Heart right ventricle (tissue), 16 donors: ENCODE measurements at regions of chr15 and their contacts with region 1.

Region 1: GRCh38 chr15:58274885-58275284 is 136.7 kb downstream of the AQP9 start:
- DNase-seq: no peak
- ATAC-seq: no peak
- H3K4me3 ChIP-seq: no peak overlapping the region
- H3K27ac ChIP-seq: no peak overlapping the region
- H3K4me1 ChIP-seq: peaks cover 0 to 5% (median 0%) of the 10 kb centered on the region in 9 donors
- H3K27me3 ChIP-seq: no peaks in the 10 kb centered on the region
- CTCF ChIP-seq: no peak

Region 2: DNA sequence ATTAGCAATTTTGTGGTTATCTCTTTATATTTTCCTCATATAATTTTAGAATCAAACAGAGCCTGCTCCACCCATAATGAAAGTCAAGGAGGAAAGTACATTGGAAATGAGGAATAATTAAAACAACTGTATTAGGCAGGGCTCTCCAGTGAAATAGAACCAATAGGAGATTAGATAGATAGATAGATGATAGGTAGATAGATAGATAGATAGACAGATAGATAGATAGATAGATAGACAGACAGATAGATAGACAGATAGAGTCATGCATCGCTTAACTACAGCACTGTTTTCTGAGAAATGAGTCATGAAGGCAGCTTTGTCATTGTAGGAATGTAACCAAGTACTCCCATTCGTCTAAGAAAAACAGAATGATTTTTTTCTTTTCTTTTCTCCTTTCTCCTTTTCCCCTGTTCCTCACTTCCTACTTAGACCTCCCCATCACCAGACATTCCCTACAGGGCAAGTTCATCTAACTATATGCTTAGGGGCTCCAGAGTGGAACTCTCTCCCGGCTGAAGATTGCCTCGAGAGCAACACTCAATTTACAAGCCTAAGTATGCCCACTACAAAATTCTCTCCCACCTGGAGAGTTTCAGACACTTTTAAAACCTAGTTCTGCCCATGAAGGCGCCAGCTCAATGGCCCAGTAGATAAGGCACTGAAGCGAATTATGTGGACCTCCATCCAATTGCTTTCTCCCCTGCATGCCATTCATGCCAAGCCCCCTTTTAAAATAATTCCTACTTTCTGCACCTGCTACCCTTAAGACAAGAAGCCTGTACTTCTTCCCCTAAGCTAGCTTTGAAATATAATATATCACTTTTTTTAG is 103.6 kb after region 1 on chr15:
- intact Hi-C with region 1: no loop called
- DNase-seq: no peak
- ATAC-seq: no peak
- H3K4me3 ChIP-seq: no peak overlapping the region
- H3K27ac ChIP-seq: no peak overlapping the region
- H3K4me1 ChIP-seq: no peaks in the 10 kb centered on the region
- H3K27me3 ChIP-seq: no peaks in the 10 kb centered on the region
- CTCF ChIP-seq: no peak

Region 3: DNA sequence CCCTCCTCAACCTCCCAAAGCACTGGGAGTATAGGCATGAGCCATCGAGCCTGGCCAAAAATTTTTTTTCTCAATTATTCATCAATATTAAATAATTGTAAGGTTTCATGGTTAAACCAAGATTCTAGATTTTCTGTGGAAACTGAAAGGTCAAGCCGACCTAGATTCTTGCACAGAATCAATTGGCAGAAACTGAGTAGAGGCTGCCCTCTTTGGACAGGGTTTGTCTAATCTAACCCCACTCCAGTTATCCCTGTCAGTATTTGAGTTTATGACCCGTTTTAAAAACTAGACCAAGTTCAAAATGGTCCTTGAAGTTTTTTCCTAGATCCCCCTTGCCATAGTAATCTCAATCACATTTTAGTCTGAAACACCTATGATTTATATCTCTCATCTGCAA is 483.3 kb after region 1 on chr15:
- intact Hi-C with region 1: loop called in 3 of 10 experiments (anchors 5 to 10 kb)
- DNase-seq: no peak
- ATAC-seq: peak in 1 of 8 donors; percentile 53
- H3K4me3 ChIP-seq: no peak overlapping the region
- H3K27ac ChIP-seq: no peak overlapping the region
- H3K4me1 ChIP-seq: no peaks in the 10 kb centered on the region
- H3K27me3 ChIP-seq: no peaks in the 10 kb centered on the region
- CTCF ChIP-seq: peak in 7 of 9 donors; percentile 21 to 57 (median 43)